Heart right ventricle (tissue), 16 donors: ENCODE measurements at regions of chr3 and their contacts with region 1.

Region 1: DNA sequence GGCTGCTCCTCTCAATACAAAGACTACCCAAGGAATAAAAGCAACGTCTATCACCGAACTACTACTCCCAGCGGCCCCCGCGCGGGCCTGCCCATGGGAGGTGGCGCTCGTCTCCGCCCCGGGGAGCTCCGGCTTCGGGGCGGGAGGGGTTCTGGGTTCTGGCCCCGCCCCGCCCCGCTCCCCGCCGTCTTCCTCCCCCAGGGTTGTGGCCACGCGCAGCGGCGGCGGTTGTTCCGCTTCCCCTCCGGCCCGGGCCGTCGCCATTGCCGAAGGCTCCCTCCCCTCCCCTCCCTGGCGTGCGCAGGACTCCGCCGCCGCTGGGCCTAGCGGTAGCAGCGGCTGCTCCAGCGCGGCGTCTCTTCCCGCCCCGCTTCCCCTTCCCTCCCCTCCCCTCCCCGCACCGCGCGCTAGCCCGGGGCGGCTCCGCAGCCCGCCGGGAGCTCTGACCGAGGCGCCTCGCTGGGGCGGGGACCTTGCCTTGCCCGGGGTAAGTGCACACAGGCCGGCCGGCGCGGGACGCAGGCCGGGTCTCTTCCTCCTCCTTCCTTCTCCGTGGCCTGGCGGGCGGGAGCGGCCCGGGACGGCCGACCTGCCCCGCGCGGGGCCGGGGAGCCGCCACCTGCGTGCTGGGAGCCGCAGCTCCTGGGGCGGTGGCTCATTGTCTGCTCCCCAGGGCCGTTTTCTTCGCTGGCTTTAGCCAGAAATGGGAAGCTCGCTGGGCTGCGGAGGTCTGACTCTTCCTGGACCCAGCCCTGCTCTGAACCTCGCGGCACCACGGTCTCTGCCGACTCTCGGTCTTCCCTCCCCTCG is at the start of gene PAK2:
- DNase-seq: peak; percentile 93 to 94
- ATAC-seq: peak; percentile 97 to 99 (median 98)
- H3K4me3 ChIP-seq: peak within 1 kb of the TSS; percentile 82 to 99 (median 91)
- H3K27ac ChIP-seq: peak within 1 kb of the TSS; percentile 96 to 99 (median 98)
- H3K4me1 ChIP-seq: peaks cover 0 to 39% (median 17%) of the 10 kb centered on the region in 9 donors
- H3K27me3 ChIP-seq: no peaks in the 10 kb centered on the region
- CTCF ChIP-seq: peak in 3 of 9 donors; percentile 25 to 37 (median 29)
- total RNA-seq, gene PAK2: 44.0 to 62.2 (median 54.7) TPM

Region 2: GRCh38 chr3:196813903-196814302 is 74.0 kb after region 1 on chr3:
- intact Hi-C with region 1: loop called in 1 of 10 experiments (anchors 5 kb)
- DNase-seq: no peak
- ATAC-seq: peak in 6 of 8 donors; percentile 73 to 92 (median 88)
- H3K4me3 ChIP-seq: no peak overlapping the region
- H3K27ac ChIP-seq: peak overlapping the region in 7 of 10 donors; percentile 10 to 69 (median 35)
- H3K4me1 ChIP-seq: no peaks in the 10 kb centered on the region
- H3K27me3 ChIP-seq: no peaks in the 10 kb centered on the region
- CTCF ChIP-seq: no peak